B cell (primary cell): ENCODE measurements at regions of chr16 and their contacts with region 1.

Region 1: GRCh38 chr16:11407047-11407982 is 62.1 kb downstream of the RMI2 start:
- DNase-seq: peak; percentile 78
- ATAC-seq: peak; percentile 71
- H3K4me3 ChIP-seq: no peak overlapping the region
- H3K4me3 Mint-ChIP-seq: no peak overlapping the region
- H3K27ac ChIP-seq: no peak overlapping the region
- H3K27ac Mint-ChIP-seq: no peak overlapping the region
- H3K4me1 ChIP-seq: no peaks in the 10 kb centered on the region
- H3K4me1 Mint-ChIP-seq: peaks cover 2% of the 10 kb centered on the region
- H3K27me3 ChIP-seq: no peaks in the 10 kb centered on the region
- H3K27me3 Mint-ChIP-seq: no peaks in the 10 kb centered on the region
- CTCF ChIP-seq: peak; percentile 83

Region 2: DNA sequence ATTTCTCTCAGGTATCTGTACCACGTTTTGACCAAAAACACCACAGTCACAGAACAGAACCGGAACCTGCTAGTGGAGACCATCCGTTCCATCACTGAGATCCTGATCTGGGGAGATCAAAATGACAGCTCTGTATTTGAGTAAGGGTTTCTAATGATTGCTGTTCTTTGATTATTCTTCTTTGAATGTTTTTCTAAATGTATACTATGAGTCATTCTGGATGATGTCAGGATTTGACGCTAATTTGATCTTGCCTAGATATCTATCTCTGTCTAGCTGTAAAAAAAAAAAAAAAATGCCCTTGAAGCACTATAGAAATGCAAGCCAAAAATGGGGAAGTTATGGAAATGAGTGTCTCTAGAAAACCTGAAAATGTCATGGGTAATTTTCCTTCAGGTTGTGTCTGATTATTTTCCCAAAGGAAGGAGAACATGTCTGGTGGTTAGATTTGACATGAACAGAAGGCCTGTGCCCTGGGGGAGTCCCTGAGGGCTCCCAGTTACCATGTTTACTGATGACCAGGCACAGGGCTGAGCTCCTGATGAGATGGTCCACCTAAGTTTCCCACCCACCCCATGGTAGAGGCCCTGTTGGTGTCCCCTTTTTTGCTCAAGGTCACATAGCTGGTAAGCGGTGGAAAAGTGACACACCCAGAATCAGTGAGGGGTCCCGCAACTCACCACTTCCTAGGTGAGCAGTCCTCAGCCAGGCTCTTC is 449.4 kb before region 1 on chr16:
- CTCF ChIA-PET with region 1: interaction called, 66 read pairs
- POLR2A ChIA-PET with region 1: no interaction called
- intact Hi-C with region 1: no loop called
- DNase-seq: peak; percentile 31
- ATAC-seq: peak; percentile 63
- H3K4me3 ChIP-seq: no peak overlapping the region
- H3K4me3 Mint-ChIP-seq: peak overlapping the region; percentile 53
- H3K27ac ChIP-seq: peak overlapping the region in 1 of 2 donors; percentile 22
- H3K27ac Mint-ChIP-seq: peak overlapping the region; percentile 62
- H3K4me1 ChIP-seq: peaks cover 21 to 30% of the 10 kb centered on the region in 2 donors
- H3K4me1 Mint-ChIP-seq: peaks cover 49% of the 10 kb centered on the region
- H3K27me3 ChIP-seq: no peaks in the 10 kb centered on the region
- H3K27me3 Mint-ChIP-seq: no peaks in the 10 kb centered on the region
- CTCF ChIP-seq: no peak

Region 3: GRCh38 chr16:11283820-11284248 is 123.5 kb before region 1 on chr16:
- CTCF ChIA-PET with region 1: no interaction called
- POLR2A ChIA-PET with region 1: interaction called, 10 read pairs
- intact Hi-C with region 1: no loop called
- DNase-seq: no peak
- ATAC-seq: no peak
- H3K4me3 ChIP-seq: no peak overlapping the region
- H3K4me3 Mint-ChIP-seq: no peak overlapping the region
- H3K27ac ChIP-seq: no peak overlapping the region
- H3K27ac Mint-ChIP-seq: peak overlapping the region; percentile 6
- H3K4me1 ChIP-seq: peaks cover 15% of the 10 kb centered on the region in 2 donors
- H3K4me1 Mint-ChIP-seq: peaks cover 31% of the 10 kb centered on the region
- H3K27me3 ChIP-seq: no peaks in the 10 kb centered on the region
- H3K27me3 Mint-ChIP-seq: no peaks in the 10 kb centered on the region
- CTCF ChIP-seq: no peak

Region 4: GRCh38 chr16:11460820-11461594 is 53.7 kb after region 1 on chr16:
- CTCF ChIA-PET with region 1: no interaction called
- POLR2A ChIA-PET with region 1: no interaction called
- intact Hi-C with region 1: no loop called
- DNase-seq: no peak
- ATAC-seq: no peak
- H3K4me3 ChIP-seq: no peak overlapping the region
- H3K4me3 Mint-ChIP-seq: no peak overlapping the region
- H3K27ac ChIP-seq: no peak overlapping the region
- H3K27ac Mint-ChIP-seq: no peak overlapping the region
- H3K4me1 ChIP-seq: no peaks in the 10 kb centered on the region
- H3K4me1 Mint-ChIP-seq: peaks cover 2% of the 10 kb centered on the region
- H3K27me3 ChIP-seq: no peaks in the 10 kb centered on the region
- H3K27me3 Mint-ChIP-seq: no peaks in the 10 kb centered on the region
- CTCF ChIP-seq: no peak

Region 5: DNA sequence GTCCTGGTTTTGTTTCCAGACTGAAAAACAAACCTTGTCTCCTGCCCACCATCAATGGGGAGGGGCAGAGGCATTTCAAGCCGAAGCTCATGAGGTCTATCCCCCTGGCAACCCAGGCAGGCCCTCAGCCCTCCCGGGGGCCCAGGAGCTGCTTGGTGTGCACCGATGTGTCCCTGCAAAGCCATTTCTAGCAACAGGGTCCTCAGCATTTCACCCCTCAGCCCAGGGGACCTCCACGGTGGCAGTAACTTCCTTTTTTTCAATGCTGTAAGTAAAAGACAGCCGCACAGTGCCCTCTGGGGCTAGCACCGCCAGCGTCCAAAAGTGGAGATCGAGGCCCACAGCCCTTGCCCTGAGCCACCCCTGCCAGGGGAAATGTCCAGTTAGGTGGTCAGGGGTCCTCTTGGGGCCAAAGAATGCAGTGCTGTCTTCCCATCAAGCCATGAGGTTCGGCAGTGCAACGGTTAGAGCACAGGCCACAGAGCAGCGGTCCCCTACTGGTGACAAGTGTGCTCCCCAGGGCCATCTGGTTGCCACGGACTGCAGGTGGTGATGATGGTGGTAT is 99.5 kb after region 1 on chr16:
- CTCF ChIA-PET with region 1: interaction called, 4 read pairs
- POLR2A ChIA-PET with region 1: interaction called, 3 read pairs
- intact Hi-C with region 1: loop called (anchors 1 kb)
- DNase-seq: peak; percentile 71
- ATAC-seq: peak; percentile 83
- H3K4me3 ChIP-seq: peak overlapping the region in 4 of 5 experiments; percentile 24 to 49 (median 41)
- H3K4me3 Mint-ChIP-seq: peak overlapping the region; percentile 86
- H3K27ac ChIP-seq: peak overlapping the region; percentile 26 to 48
- H3K27ac Mint-ChIP-seq: peak overlapping the region; percentile 83
- H3K4me1 ChIP-seq: peaks cover 8 to 13% of the 10 kb centered on the region in 2 donors
- H3K4me1 Mint-ChIP-seq: peaks cover 15% of the 10 kb centered on the region
- H3K27me3 ChIP-seq: no peaks in the 10 kb centered on the region
- H3K27me3 Mint-ChIP-seq: no peaks in the 10 kb centered on the region
- CTCF ChIP-seq: peak; percentile 46

Region 6: DNA sequence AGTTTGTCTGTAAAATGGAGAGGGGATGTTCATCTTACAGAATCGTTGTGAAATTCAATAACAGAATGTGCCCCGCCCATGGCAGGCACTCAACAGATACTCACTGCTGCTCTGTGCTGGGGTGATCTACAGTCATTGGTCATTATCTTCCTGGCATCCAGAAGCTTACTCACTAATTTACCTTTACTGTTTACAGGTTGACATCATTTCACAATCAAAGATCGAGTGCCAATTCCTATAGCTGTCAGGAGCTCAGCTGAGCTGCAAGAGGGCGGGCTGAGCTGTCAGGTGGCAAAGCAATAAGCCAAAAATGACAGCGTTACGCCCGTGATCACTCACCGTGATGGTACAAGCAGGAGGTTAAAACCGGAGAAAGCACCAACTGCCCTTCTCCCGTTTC is 128.2 kb after region 1 on chr16:
- CTCF ChIA-PET with region 1: interaction called, 36 read pairs
- POLR2A ChIA-PET with region 1: no interaction called
- intact Hi-C with region 1: loop called (anchors 1 kb)
- DNase-seq: no peak
- ATAC-seq: no peak
- H3K4me3 ChIP-seq: no peak overlapping the region
- H3K4me3 Mint-ChIP-seq: no peak overlapping the region
- H3K27ac ChIP-seq: no peak overlapping the region
- H3K27ac Mint-ChIP-seq: no peak overlapping the region
- H3K4me1 ChIP-seq: no peaks in the 10 kb centered on the region
- H3K4me1 Mint-ChIP-seq: peaks cover 5% of the 10 kb centered on the region
- H3K27me3 ChIP-seq: no peaks in the 10 kb centered on the region
- H3K27me3 Mint-ChIP-seq: no peaks in the 10 kb centered on the region
- CTCF ChIP-seq: no peak

Region 7: GRCh38 chr16:11689031-11689761 is 281.9 kb after region 1 on chr16:
- CTCF ChIA-PET with region 1: interaction called, 10 read pairs
- POLR2A ChIA-PET with region 1: no interaction called
- intact Hi-C with region 1: no loop called
- DNase-seq: peak; percentile 87
- ATAC-seq: peak; percentile 96
- H3K4me3 ChIP-seq: peak overlapping the region in 1 of 5 experiments; percentile 49
- H3K4me3 Mint-ChIP-seq: peak overlapping the region; percentile 88
- H3K27ac ChIP-seq: peak overlapping the region; percentile 80 to 89
- H3K27ac Mint-ChIP-seq: peak overlapping the region; percentile 98
- H3K4me1 ChIP-seq: peaks cover 70 to 71% of the 10 kb centered on the region in 2 donors
- H3K4me1 Mint-ChIP-seq: peaks cover 76% of the 10 kb centered on the region
- H3K27me3 ChIP-seq: no peaks in the 10 kb centered on the region
- H3K27me3 Mint-ChIP-seq: no peaks in the 10 kb centered on the region
- CTCF ChIP-seq: no peak